KBM-7 (cell line): ENCODE measurements at regions of chr10 and their contacts with region 1.

Region 1: DNA sequence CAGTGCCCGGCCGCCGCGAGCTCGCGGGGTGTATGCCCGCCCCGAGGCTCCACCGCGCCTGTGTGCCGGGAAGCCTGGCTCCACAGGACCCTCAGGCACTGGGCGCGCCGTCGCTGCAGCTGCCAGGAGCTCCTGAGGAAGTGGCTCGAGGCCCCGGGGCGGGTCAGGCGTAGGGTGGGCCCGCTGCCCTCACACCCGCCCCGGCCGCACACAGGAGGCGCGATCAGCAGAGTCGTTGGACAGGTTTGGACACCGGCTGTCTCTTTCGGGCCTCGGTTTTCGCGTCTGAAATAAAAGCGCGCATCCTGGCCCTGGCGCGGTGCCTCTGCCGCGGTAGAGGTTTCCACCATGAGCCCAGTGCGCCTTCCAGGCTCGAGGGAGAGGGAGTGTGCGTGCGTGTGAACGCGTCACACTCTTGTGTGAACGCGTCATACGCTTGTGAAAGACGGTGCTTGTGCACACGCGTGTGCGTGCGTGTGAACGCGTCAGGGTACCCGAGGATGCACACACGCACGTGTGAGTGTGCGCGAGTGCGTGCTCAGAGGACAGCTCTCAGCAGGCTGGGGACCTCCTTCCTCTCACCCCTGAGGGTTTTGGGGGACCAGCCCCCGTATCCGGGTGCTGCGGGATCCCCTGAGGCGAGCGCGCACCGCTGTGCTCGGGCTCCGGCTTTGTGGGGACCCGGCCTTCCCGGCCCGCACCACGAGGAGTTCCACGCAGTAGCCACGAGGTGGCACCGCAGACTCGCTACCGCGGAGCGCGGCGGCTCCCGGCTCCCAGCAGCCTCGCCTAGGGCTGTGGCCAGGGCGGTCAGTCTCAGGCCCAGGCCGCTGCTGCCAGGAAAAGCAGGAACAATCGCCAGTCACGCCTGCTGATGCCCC is 83.8 kb downstream of the BMS1 start:
- DNase-seq: peak; percentile 60

Region 2: GRCh38 chr10:43078987-43079275 is 212.6 kb after region 1 on chr10:
- in situ Hi-C with region 1: loop called (anchors 25 kb)
- DNase-seq: peak; percentile 33